ENCODE measurements at regions of chr5 and their contacts with region 1.

Region 1: DNA sequence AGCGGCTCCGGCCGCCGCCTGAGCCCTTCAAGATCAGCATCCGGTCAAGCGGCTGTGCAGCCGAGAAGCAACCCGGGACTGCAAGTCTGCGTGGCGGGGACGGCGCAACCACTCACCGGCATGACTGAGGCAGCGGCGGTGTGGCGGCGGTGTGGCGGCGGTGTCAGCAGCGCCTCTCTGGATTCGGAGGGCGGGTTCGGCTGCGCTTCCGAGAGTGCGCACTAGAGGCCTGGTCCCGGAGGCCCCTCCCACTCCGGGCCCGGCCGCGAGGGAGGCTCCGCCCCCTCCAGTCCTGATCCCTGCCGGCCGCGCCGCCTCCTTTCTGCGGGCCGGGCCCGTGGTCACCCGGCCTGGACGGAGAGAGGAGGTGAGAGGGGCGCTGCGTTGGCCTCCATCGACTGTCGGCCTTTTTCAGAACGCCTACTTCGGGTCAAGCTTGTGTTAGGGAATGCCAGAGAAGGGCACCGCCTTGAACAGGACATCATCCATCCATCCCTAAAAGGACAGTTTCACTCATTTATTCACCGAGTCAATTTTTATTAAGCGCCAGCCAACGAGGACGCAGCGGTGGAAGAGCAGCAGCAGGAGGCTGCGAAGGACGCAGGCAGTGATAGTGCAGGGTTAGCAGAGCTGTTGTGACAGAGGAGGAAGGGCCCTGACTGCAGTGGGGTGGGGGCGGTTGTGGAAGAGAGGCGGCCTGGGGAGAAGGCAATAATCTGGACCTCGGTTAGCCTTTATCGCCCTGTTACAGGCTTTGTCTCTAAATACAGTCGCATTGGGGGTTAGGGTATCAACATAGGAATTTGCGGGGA is at the start of gene ATOX1:
- DNase-seq: peak; percentile 65 to 95
- H3K4me3 ChIP-seq: peak within 1 kb of the TSS; percentile 97
- H3K27ac ChIP-seq: 0 out of 2 replicates have a peak within 1 kb of the TSS, but pooled peaks have one; percentile 24
- H3K4me1 ChIP-seq: peaks cover 16% of the 10 kb centered on the region
- H3K27me3 ChIP-seq: no peaks in the 10 kb centered on the region
- CTCF ChIP-seq: no peak
- total RNA-seq, gene ATOX1: 175 and 201 TPM in 2 replicates

Region 2: DNA sequence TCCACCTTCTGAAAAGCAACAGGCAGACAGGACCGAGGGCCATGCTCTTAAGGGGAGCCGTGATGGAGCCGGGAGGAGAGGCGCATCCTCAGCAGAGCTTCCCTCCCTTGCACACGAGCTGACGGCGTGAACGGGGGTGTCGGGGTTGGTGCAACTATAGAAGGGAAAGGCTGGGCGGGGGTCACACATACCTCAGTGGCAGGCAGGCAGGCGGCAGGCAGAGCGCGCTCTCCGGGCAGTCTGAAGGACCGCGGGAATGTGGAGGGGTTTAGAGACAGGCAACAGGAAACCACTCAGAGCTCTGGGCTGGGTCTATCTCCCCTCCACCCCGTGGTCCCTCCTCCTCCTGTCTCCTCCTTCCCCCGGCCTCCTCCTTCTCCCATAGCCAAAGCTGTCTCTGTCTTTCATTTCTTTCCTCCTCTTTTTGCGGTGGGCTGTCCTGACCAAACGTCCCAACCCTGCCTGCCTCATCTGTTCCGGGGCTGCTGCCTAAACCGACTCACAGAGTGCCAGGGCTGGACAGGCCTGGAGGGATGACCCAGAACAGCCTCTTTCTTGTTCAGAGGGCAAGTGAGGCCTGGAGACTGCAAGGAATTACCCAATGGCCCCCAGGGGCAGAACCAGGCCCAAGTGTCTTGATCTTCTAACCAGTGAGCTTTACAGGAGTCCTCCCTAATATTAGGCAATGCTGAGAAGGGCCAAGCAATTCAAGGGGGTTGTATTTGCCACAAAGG is 71.8 kb before region 1 on chr5 and contains the start of gene SPARC:
- CTCF ChIA-PET with region 1: no interaction called
- POLR2A ChIA-PET with region 1: no interaction called
- intact Hi-C with region 1: loop called (anchors 5 kb)
- DNase-seq: peak in 1 of 2 experiments; percentile 52
- H3K4me3 ChIP-seq: no peak within 1 kb of the TSS
- H3K27ac ChIP-seq: no peak within 1 kb of the TSS
- H3K4me1 ChIP-seq: peaks cover 35% of the 10 kb centered on the region
- H3K27me3 ChIP-seq: no peaks in the 10 kb centered on the region
- CTCF ChIP-seq: no peak
- total RNA-seq, gene SPARC: 68.7 and 84.1 TPM in 2 replicates

Measured in PC-9 (cell line).